ENCODE measurements at regions of chr1 and their contacts with region 1.

Region 1: DNA sequence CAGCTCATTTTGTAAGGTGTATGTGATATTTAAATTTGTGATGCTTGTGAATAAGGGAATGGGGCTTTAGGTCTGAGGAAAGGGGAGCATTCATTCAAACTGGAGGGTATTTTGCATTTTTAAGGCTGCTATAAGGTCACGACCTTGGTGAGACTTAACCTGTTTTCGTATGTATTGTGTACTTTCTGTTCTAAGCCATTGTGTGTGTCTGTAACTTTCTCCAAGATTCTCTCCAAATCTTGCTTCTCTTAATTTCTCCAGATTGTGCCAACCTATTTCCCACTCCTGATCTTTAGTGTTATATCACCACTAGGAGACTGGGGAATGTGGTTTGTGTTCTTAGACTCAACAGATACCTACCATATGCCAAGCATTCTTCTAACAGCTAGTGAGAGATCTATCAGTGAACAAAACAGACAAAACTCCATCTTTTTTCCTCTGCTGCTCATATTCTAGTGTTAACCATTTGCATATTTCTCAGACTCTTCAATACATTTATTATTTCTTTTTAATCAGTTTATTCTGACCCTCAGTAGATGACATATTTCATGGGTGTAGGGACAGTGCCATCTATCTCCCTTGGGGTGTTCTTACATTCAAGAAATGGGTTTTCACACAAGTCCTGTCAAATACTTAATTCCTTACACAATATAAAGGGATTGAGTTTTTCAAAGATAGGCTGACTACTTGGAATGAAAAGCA is 27.5 kb downstream of the ATP1B1 start:
- H3K4me3 Mint-ChIP-seq: no peak overlapping the region
- H3K27ac Mint-ChIP-seq: no peak overlapping the region
- H3K4me1 Mint-ChIP-seq: no peaks in the 10 kb centered on the region
- H3K27me3 Mint-ChIP-seq: no peaks in the 10 kb centered on the region

Region 2: GRCh38 chr1:168603501-168604110 is 530.3 kb before region 1 on chr1:
- intact Hi-C with region 1: loop called (anchors 5 kb)
- H3K4me3 Mint-ChIP-seq: no peak overlapping the region
- H3K27ac Mint-ChIP-seq: no peak overlapping the region
- H3K4me1 Mint-ChIP-seq: no peaks in the 10 kb centered on the region
- H3K27me3 Mint-ChIP-seq: no peaks in the 10 kb centered on the region

Region 3: GRCh38 chr1:168907786-168908348 is 226.1 kb before region 1 on chr1:
- intact Hi-C with region 1: no loop called
- H3K4me3 Mint-ChIP-seq: no peak overlapping the region
- H3K27ac Mint-ChIP-seq: no peak overlapping the region
- H3K4me1 Mint-ChIP-seq: peaks cover 8% of the 10 kb centered on the region
- H3K27me3 Mint-ChIP-seq: peaks cover 6% of the 10 kb centered on the region

Region 4: GRCh38 chr1:169115891-169116585 is 17.9 kb before region 1 on chr1:
- intact Hi-C with region 1: loop called (anchors 2 kb)
- H3K4me3 Mint-ChIP-seq: peak overlapping the region; percentile 53
- H3K27ac Mint-ChIP-seq: peak overlapping the region; percentile 87
- H3K4me1 Mint-ChIP-seq: peaks cover 59% of the 10 kb centered on the region
- H3K27me3 Mint-ChIP-seq: no peaks in the 10 kb centered on the region

Measured in dendritic cell treated with granulocyte-macrophage colony-stimulating factor and Interleukin-4, amounts not matched to agents 40 ng/mL and 50 ng/mL, for 4 days (primary cell).